WTC11 (cell line): ENCODE measurements at regions of chr5 and their contacts with region 1.

Region 1: DNA sequence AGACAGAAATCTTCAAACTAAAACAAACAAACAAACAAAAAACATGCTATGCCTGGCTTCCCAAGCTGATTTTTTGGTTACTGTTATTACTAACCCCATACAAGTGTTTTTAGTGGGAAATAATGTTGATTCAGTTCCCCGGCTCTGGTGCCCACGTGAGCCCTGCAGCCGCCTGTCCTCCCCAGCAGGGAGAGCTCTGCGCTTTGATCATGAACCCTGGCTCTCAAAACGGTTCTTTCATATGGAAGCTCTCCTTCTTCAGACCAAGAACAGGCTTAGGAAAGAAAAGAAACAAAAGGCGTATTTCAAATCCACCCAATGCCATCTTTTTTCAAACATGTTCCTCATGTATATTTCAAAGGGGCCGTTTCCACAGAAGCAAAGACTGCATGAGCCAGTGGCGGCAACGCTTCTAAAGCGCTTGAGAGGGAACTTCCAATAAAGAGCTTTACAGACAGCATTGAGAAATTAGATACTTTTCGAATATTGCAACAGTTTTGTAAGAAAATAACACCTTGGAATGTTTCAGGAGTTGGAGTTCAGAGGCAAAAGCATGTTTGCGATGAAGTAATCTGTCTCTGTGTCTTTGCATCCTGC is 74.8 kb downstream of the ICE1 start:
- DNase-seq: peak; percentile 55
- ATAC-seq: peak; percentile 18
- H3K4me3 Mint-ChIP-seq: no peak overlapping the region
- H3K27ac Mint-ChIP-seq: no peak overlapping the region
- H3K4me1 Mint-ChIP-seq: peaks cover 49% of the 10 kb centered on the region
- H3K27me3 Mint-ChIP-seq: peaks cover 23% of the 10 kb centered on the region
- CTCF ChIP-seq: no peak

Region 2: DNA sequence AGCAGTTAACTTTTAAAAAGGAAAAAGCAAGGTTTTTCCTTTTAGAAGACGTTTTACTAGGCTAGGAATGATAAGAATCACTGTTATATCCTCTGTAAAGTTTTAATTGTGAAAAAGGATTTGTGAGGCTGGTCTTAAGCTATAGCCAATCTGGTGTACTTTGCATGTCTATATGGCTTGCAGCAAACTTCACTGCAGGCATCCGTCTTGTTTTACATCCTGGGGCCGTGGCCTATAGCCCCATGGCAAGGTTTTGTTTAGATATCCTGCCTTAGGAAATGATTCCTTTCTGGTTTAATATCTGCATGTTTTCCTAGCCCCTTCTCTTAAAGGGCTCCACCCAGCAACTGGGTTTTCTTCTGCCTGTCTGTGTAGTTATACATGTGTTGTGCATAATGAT is 198.0 kb after region 1 on chr5:
- CTCF ChIA-PET with region 1: interaction called, 10 read pairs
- POLR2A ChIA-PET with region 1: no interaction called
- DNase-seq: no peak
- ATAC-seq: peak; percentile 91
- H3K4me3 Mint-ChIP-seq: no peak overlapping the region
- H3K27ac Mint-ChIP-seq: peak overlapping the region; percentile 96
- H3K4me1 Mint-ChIP-seq: peaks cover 31% of the 10 kb centered on the region
- H3K27me3 Mint-ChIP-seq: peaks cover 7% of the 10 kb centered on the region
- CTCF ChIP-seq: no peak

Region 3: GRCh38 chr5:5881294-5881693 is 384.0 kb after region 1 on chr5:
- CTCF ChIA-PET with region 1: interaction called, 14 read pairs
- POLR2A ChIA-PET with region 1: interaction called, 3 read pairs
- DNase-seq: peak; percentile 80
- ATAC-seq: peak; percentile 99
- H3K4me3 Mint-ChIP-seq: no peak overlapping the region
- H3K27ac Mint-ChIP-seq: no peak overlapping the region
- H3K4me1 Mint-ChIP-seq: peaks cover 3% of the 10 kb centered on the region
- H3K27me3 Mint-ChIP-seq: no peaks in the 10 kb centered on the region
- CTCF ChIP-seq: no peak

Region 4: GRCh38 chr5:5886812-5887486 is 389.7 kb after region 1 on chr5:
- CTCF ChIA-PET with region 1: interaction called, 14 read pairs
- POLR2A ChIA-PET with region 1: no interaction called
- DNase-seq: peak; percentile 76
- ATAC-seq: peak; percentile 97
- H3K4me3 Mint-ChIP-seq: peak overlapping the region; percentile 39; the same call in 1 of the 2 replicates
- H3K27ac Mint-ChIP-seq: no peak overlapping the region
- H3K4me1 Mint-ChIP-seq: no peaks in the 10 kb centered on the region; the same call in 1 of the 2 replicates
- H3K27me3 Mint-ChIP-seq: peaks cover 10% of the 10 kb centered on the region
- CTCF ChIP-seq: peak; percentile 79